ENCODE measurements at regions of chrX and their contacts with region 1.

Region 1: GRCh38 chrX:23901805-23902204 is 5.9 kb downstream of the APOO start:
- DNase-seq: no peak
- H3K4me3 ChIP-seq: peak overlapping the region in 1 of 2 donors; percentile 20
- H3K27ac ChIP-seq: peak overlapping the region; percentile 64
- H3K4me1 ChIP-seq: peaks cover 6% of the 10 kb centered on the region
- H3K27me3 ChIP-seq: no peaks in the 10 kb centered on the region
- CTCF ChIP-seq: peak in 1 of 3 experiments; percentile 35
- POLR2A ChIP-seq: no peak

Region 2: DNA sequence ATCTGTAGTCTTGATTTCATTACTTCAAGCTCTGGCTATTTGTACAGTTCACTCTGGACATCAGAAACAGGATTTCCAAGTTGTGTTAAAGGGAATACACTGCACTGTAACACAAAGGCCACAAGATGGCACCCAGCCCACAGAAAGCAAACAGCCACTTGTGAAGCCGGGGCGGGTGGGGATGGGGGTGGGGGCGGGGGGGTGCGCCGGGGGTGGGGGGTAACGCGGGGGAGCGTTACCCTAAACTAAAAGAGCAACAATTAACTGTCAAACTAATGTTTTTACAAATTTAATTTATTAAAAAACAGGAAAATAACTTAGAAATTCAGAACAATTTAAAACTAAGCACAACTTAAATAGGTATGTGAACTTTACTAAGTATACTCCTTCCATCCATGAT is 207.2 kb before region 1 on chrX:
- intact Hi-C with region 1: loop called (anchors 5 kb)
- DNase-seq: no peak
- H3K4me3 ChIP-seq: no peak overlapping the region
- H3K27ac ChIP-seq: no peak overlapping the region
- H3K4me1 ChIP-seq: no peaks in the 10 kb centered on the region
- H3K27me3 ChIP-seq: no peaks in the 10 kb centered on the region
- CTCF ChIP-seq: peak in 1 of 3 experiments; percentile 38
- POLR2A ChIP-seq: no peak

Region 3: GRCh38 chrX:23782863-23783568 is 118.8 kb before region 1 on chrX and contains the start of gene SAT1:
- intact Hi-C with region 1: loop called (anchors 5 kb)
- DNase-seq: peak; percentile 96 to 97
- H3K4me3 ChIP-seq: peak within 1 kb of the TSS; percentile 51 to 64
- H3K27ac ChIP-seq: peak within 1 kb of the TSS; percentile 94
- H3K4me1 ChIP-seq: no peaks in the 10 kb centered on the region
- H3K27me3 ChIP-seq: no peaks in the 10 kb centered on the region
- CTCF ChIP-seq: peak; percentile 36 to 68 (median 58)
- POLR2A ChIP-seq: peak in 1 of 2 donors; percentile 97
- total RNA-seq, gene SAT1: 389 TPM